ENCODE measurements at regions of chr6 and their contacts with region 1.

Region 1: DNA sequence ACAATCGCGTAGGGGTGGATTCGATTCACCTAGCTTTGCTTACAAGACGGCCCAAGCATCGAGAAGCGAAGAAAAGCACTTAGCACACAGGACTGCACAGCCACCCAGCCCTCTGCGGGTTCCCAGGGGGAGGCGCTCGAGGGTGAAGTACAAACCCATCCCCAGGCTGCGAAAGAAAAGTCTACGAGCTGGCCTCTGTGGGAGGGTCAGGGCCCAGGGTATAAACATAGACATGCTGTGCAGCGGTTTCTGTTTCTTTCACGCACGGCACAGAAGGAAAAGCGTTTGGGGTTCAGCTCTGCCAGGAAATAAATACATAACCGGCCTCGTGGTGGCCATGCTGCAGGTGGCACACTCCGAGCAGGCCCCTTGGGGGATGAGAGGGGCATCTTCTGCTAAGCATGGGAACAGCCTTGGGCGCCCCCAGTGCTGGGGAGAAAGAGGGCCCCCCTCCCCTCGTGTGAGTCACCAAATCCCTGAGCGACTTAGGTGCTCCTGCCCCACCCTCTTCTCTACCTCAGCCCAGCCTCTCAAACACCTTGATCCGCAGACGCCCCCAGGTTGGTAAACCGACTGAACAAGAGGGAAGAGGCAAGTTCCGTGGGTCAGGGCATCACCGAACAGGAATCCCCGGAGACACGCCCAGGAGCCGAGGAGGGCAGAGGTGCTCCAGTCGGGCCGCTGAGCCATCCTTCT is 91.6 kb upstream of the RIPOR2 start:
- DNase-seq: peak; percentile 58 to 87 (median 76)
- ATAC-seq: peak; percentile 95 to 98 (median 96)
- H3K4me3 ChIP-seq: peak overlapping the region; percentile 35 to 58
- H3K4me3 Mint-ChIP-seq: peak overlapping the region; percentile 72 to 80 (median 75)
- H3K27ac ChIP-seq: peak overlapping the region; percentile 85
- H3K27ac Mint-ChIP-seq: peak overlapping the region; percentile 86 to 91
- H3K4me1 ChIP-seq: peaks cover 21 to 30% of the 10 kb centered on the region in 2 experiments
- H3K4me1 Mint-ChIP-seq: peaks cover 46 to 60% (median 55%) of the 10 kb centered on the region in 3 donors
- H3K27me3 ChIP-seq: no peaks in the 10 kb centered on the region
- H3K27me3 Mint-ChIP-seq: no peaks in the 10 kb centered on the region

Region 2: GRCh38 chr6:24855395-24856245 is 171.7 kb before region 1 on chr6:
- CTCF ChIA-PET with region 1: interaction called, 4 to 21 read pairs
- POLR2A ChIA-PET with region 1: interaction called in 1 of 2 experiments, 3 read pairs
- DNase-seq: peak in 34 of 35 experiments; percentile 47 to 90 (median 64)
- ATAC-seq: peak; percentile 32 to 59 (median 50)
- H3K4me3 ChIP-seq: no peak overlapping the region
- H3K4me3 Mint-ChIP-seq: peak overlapping the region in 1 of 3 donors; percentile 73
- H3K27ac ChIP-seq: peak overlapping the region; percentile 76
- H3K27ac Mint-ChIP-seq: peak overlapping the region; percentile 95 to 99
- H3K4me1 ChIP-seq: peaks cover 42 to 47% of the 10 kb centered on the region in 2 experiments
- H3K4me1 Mint-ChIP-seq: peaks cover 52 to 72% (median 59%) of the 10 kb centered on the region in 3 donors
- H3K27me3 ChIP-seq: no peaks in the 10 kb centered on the region
- H3K27me3 Mint-ChIP-seq: no peaks in the 10 kb centered on the region

Region 3: GRCh38 chr6:24943774-24944173 is 83.6 kb before region 1 on chr6:
- CTCF ChIA-PET with region 1: no interaction called
- POLR2A ChIA-PET with region 1: interaction called in 1 of 2 experiments, 14 read pairs
- DNase-seq: no peak
- ATAC-seq: no peak
- H3K4me3 ChIP-seq: no peak overlapping the region
- H3K4me3 Mint-ChIP-seq: no peak overlapping the region
- H3K27ac ChIP-seq: no peak overlapping the region
- H3K27ac Mint-ChIP-seq: peak overlapping the region in 1 of 2 donors; percentile 86
- H3K4me1 ChIP-seq: peaks cover 40 to 42% of the 10 kb centered on the region in 2 experiments
- H3K4me1 Mint-ChIP-seq: peaks cover 61 to 69% (median 63%) of the 10 kb centered on the region in 3 donors
- H3K27me3 ChIP-seq: no peaks in the 10 kb centered on the region
- H3K27me3 Mint-ChIP-seq: no peaks in the 10 kb centered on the region

Region 4: GRCh38 chr6:25042036-25042521 is 14.7 kb after region 1 on chr6:
- CTCF ChIA-PET with region 1: interaction called, 19 to 37 read pairs
- POLR2A ChIA-PET with region 1: interaction called, 4 to 5 read pairs
- DNase-seq: peak in 34 of 35 experiments; percentile 18 to 75 (median 37)
- ATAC-seq: peak; percentile 62 to 78 (median 72)
- H3K4me3 ChIP-seq: peak overlapping the region; percentile 75 to 80
- H3K4me3 Mint-ChIP-seq: peak overlapping the region; percentile 95 to 100 (median 98)
- H3K27ac ChIP-seq: peak overlapping the region; percentile 93
- H3K27ac Mint-ChIP-seq: peak overlapping the region; percentile 95 to 100
- H3K4me1 ChIP-seq: peaks cover 30 to 53% of the 10 kb centered on the region in 2 experiments
- H3K4me1 Mint-ChIP-seq: peaks cover 63 to 70% (median 64%) of the 10 kb centered on the region in 3 donors
- H3K27me3 ChIP-seq: no peaks in the 10 kb centered on the region
- H3K27me3 Mint-ChIP-seq: no peaks in the 10 kb centered on the region

Region 5: GRCh38 chr6:25070547-25071366 is 43.4 kb after region 1 on chr6:
- CTCF ChIA-PET with region 1: interaction called, 23 to 136 read pairs
- POLR2A ChIA-PET with region 1: interaction called in 1 of 2 experiments, 4 read pairs
- DNase-seq: peak; percentile 62 to 93 (median 76)
- ATAC-seq: peak; percentile 91 to 94 (median 94)
- H3K4me3 ChIP-seq: no peak overlapping the region
- H3K4me3 Mint-ChIP-seq: peak overlapping the region; percentile 28 to 59 (median 56)
- H3K27ac ChIP-seq: peak overlapping the region; percentile 61
- H3K27ac Mint-ChIP-seq: peak overlapping the region; percentile 87 to 89
- H3K4me1 ChIP-seq: peaks cover 0 to 5% of the 10 kb centered on the region in 2 experiments
- H3K4me1 Mint-ChIP-seq: peaks cover 4 to 9% (median 5%) of the 10 kb centered on the region in 3 donors
- H3K27me3 ChIP-seq: no peaks in the 10 kb centered on the region
- H3K27me3 Mint-ChIP-seq: no peaks in the 10 kb centered on the region

Region 6: DNA sequence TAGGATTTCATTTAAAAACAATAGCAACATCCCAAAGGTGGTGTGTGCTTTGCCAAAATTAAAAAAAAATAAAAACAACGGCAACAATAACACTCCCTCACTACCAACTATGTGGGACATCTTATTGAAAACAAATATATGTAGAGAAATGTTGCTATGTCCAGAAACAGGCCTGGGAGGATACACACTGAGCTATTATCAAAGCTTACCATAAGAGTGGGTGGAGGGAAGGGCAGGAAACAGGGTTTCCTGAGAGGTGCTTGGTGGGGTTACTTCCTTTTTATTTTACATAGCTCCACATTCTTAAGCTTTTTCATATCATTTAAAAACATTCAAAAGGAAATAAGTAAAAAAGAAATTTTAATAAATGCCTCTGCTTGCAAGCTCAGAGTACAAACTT is 58.4 kb after region 1 on chr6:
- CTCF ChIA-PET with region 1: interaction called in 1 of 2 experiments, 10 read pairs
- POLR2A ChIA-PET with region 1: no interaction called
- DNase-seq: peak in 9 of 35 experiments; percentile 3 to 30 (median 10)
- ATAC-seq: peak; percentile 75 to 88 (median 83)
- H3K4me3 ChIP-seq: no peak overlapping the region
- H3K4me3 Mint-ChIP-seq: no peak overlapping the region
- H3K27ac ChIP-seq: no peak overlapping the region
- H3K27ac Mint-ChIP-seq: peak overlapping the region; percentile 57 to 73
- H3K4me1 ChIP-seq: peaks cover 12 to 29% of the 10 kb centered on the region in 2 experiments
- H3K4me1 Mint-ChIP-seq: peaks cover 7 to 24% (median 16%) of the 10 kb centered on the region in 3 donors
- H3K27me3 ChIP-seq: no peaks in the 10 kb centered on the region
- H3K27me3 Mint-ChIP-seq: no peaks in the 10 kb centered on the region

Measured in T-cell (primary cell).